ENCODE measurements at regions of chr10 and their contacts with region 1.

Region 1: GRCh38 chr10:82492647-82493046 is 617.7 kb downstream of the NRG3 start:
- DNase-seq: no peak
- H3K4me3 ChIP-seq: no peak overlapping the region
- H3K4me3 Mint-ChIP-seq: no peak overlapping the region
- H3K27ac Mint-ChIP-seq: no peak overlapping the region
- H3K4me1 ChIP-seq: no peaks in the 10 kb centered on the region
- H3K4me1 Mint-ChIP-seq: no peaks in the 10 kb centered on the region
- H3K27me3 ChIP-seq: no peaks in the 10 kb centered on the region
- H3K27me3 Mint-ChIP-seq: no peaks in the 10 kb centered on the region
- CTCF ChIP-seq: no peak

Region 2: GRCh38 chr10:82628373-82628772 is 135.7 kb after region 1 on chr10:
- CTCF ChIA-PET with region 1: no interaction called
- POLR2A ChIA-PET with region 1: no interaction called
- intact Hi-C with region 1: loop called (anchors 2 kb)
- DNase-seq: peak; percentile 42 to 51
- H3K4me3 ChIP-seq: no peak overlapping the region
- H3K4me3 Mint-ChIP-seq: peak overlapping the region; percentile 23
- H3K27ac Mint-ChIP-seq: peak overlapping the region; percentile 62
- H3K4me1 ChIP-seq: peaks cover 14% of the 10 kb centered on the region
- H3K4me1 Mint-ChIP-seq: peaks cover 15% of the 10 kb centered on the region
- H3K27me3 ChIP-seq: no peaks in the 10 kb centered on the region
- H3K27me3 Mint-ChIP-seq: no peaks in the 10 kb centered on the region
- CTCF ChIP-seq: no peak

Measured in Caco-2 (cell line).